Psoas muscle (tissue), 8 donors: ENCODE measurements at regions of chr10 and their contacts with region 1.

Region 1: DNA sequence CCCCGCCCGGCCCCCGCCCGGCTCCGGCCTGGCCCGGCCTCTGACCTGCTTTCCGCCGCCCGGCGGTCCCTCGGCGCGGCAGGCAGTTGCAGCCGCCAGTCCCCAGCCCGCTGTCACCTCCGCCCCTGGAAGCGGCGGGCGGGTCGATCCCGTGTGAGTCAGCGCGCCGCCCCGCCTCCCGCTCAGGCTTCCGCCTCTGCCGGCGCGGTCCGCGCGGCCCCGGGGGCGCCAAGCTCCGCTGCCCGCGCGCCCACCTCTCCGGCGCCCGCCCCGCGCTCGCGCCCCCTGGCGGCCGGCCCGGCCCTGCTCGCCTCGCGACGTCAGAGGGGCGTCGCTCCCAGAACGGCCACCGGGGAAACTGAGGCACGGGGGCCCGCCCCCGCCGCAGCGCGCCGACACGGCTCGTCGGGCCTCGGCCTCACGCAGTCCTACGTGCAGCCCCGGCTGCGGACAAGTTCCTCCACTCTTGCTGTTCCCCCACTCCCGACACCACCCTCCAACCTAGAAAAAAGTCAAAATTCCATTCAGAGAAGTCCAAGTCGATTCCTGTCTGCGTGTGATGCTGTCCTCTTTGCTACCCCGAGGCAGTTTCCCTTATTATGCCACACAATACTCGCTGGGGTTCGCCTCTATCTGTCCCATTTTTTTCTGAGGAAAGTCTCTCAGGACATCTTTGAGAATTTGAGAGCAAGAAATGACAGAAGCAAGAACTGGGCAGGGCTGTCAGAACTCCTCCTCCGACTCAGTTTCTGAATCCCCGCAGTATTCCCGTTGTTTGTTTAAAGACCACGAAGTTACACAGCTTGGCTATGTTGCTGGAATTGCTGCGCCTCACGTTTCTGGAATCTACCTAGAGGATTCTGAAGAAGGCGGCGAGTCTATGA is at the start of gene DNMBP:
- DNase-seq: peak; percentile 91 to 93
- ATAC-seq: peak; percentile 92 to 96 (median 92)
- H3K4me3 ChIP-seq: peak within 1 kb of the TSS; percentile 94
- H3K27ac ChIP-seq: peak within 1 kb of the TSS; percentile 79
- H3K4me1 ChIP-seq: peaks cover 31% of the 10 kb centered on the region
- H3K27me3 ChIP-seq: no peaks in the 10 kb centered on the region
- CTCF ChIP-seq: peak; percentile 64
- total RNA-seq, gene DNMBP: 10.7 to 16.9 (median 12.4) TPM

Region 2: GRCh38 chr10:99845837-99846382 is 164.1 kb before region 1 on chr10:
- intact Hi-C with region 1: loop called in 1 of 2 experiments (anchors 10 kb)
- DNase-seq: peak; percentile 58 to 70
- ATAC-seq: peak; percentile 91 to 98 (median 94)
- H3K4me3 ChIP-seq: peak overlapping the region; percentile 36
- H3K27ac ChIP-seq: no peak overlapping the region
- H3K4me1 ChIP-seq: peaks cover 10% of the 10 kb centered on the region
- H3K27me3 ChIP-seq: no peaks in the 10 kb centered on the region
- CTCF ChIP-seq: peak; percentile 96

Region 3: GRCh38 chr10:99906470-99906869 is 103.6 kb before region 1 on chr10:
- intact Hi-C with region 1: loop called in 1 of 2 experiments (anchors 1 kb)
- DNase-seq: peak; percentile 66 to 81
- ATAC-seq: peak; percentile 97 to 98 (median 98)
- H3K4me3 ChIP-seq: no peak overlapping the region
- H3K27ac ChIP-seq: peak overlapping the region; percentile 61
- H3K4me1 ChIP-seq: peaks cover 8% of the 10 kb centered on the region
- H3K27me3 ChIP-seq: no peaks in the 10 kb centered on the region
- CTCF ChIP-seq: no peak

Region 4: GRCh38 chr10:99976886-99977665 is 33.0 kb before region 1 on chr10:
- intact Hi-C with region 1: loop called in 1 of 2 experiments (anchors 5 kb)
- DNase-seq: no peak
- ATAC-seq: peak; percentile 37 to 77 (median 73)
- H3K4me3 ChIP-seq: peak overlapping the region; percentile 1
- H3K27ac ChIP-seq: peak overlapping the region; percentile 56
- H3K4me1 ChIP-seq: peaks cover 46% of the 10 kb centered on the region
- H3K27me3 ChIP-seq: no peaks in the 10 kb centered on the region
- CTCF ChIP-seq: no peak

Region 5: DNA sequence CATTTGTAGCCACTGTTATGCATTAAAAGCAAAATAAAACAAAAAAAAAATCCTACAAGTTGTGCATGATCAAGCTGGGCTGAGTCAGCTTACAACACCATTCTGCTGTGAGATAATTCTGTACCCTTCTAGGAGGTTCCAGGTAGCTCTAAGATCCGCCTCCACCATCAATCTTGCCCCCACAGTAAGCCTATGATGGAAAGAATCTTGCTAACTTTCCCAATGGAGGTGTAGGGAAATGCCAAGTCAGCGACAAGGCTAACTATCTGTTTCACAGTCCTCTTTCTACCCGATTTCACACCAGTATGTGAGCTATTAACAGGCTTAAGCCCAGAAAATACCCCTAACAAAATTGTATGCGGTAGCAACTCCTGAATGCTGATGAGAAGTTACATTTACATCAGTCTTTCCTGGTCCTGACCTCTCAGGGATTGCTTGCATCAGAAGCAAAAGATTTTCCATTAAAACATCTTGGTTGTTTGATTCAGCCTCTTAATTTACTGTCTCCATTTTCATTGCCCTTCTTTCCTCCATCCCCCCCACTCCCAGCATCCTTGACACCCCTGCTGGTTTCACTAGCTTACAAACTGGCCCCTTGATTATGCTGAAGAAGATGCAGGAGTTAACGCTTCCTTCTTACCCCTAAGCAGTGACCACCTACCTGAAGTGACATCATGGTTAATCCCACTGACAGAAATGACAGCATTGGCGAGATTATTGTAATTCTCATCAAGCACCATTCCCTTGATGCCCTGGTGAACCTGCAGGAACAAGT is 43.8 kb after region 1 on chr10:
- intact Hi-C with region 1: no loop called
- DNase-seq: no peak
- ATAC-seq: no peak
- H3K4me3 ChIP-seq: no peak overlapping the region
- H3K27ac ChIP-seq: no peak overlapping the region
- H3K4me1 ChIP-seq: no peaks in the 10 kb centered on the region
- H3K27me3 ChIP-seq: peaks cover 0 to 15% (median 1%) of the 10 kb centered on the region in 3 donors
- CTCF ChIP-seq: no peak